ENCODE measurements at regions of chr12 and their contacts with region 1.

Region 1: GRCh38 chr12:47773062-47773857 is at the start of gene SLC48A1:
- DNase-seq: peak; percentile 53 to 80 (median 76)
- ATAC-seq: peak; percentile 91
- H3K4me3 Mint-ChIP-seq: peak within 1 kb of the TSS; percentile 82 to 92 (median 88)
- H3K27ac Mint-ChIP-seq: peak within 1 kb of the TSS; percentile 49 to 88 (median 80)
- H3K4me1 Mint-ChIP-seq: peaks cover 9 to 33% (median 22%) of the 10 kb centered on the region in 4 donors
- H3K27me3 Mint-ChIP-seq: no peaks in the 10 kb centered on the region
- polyA plus RNA-seq, gene SLC48A1: 9.4 to 11.6 (median 9.7) TPM

Region 2: DNA sequence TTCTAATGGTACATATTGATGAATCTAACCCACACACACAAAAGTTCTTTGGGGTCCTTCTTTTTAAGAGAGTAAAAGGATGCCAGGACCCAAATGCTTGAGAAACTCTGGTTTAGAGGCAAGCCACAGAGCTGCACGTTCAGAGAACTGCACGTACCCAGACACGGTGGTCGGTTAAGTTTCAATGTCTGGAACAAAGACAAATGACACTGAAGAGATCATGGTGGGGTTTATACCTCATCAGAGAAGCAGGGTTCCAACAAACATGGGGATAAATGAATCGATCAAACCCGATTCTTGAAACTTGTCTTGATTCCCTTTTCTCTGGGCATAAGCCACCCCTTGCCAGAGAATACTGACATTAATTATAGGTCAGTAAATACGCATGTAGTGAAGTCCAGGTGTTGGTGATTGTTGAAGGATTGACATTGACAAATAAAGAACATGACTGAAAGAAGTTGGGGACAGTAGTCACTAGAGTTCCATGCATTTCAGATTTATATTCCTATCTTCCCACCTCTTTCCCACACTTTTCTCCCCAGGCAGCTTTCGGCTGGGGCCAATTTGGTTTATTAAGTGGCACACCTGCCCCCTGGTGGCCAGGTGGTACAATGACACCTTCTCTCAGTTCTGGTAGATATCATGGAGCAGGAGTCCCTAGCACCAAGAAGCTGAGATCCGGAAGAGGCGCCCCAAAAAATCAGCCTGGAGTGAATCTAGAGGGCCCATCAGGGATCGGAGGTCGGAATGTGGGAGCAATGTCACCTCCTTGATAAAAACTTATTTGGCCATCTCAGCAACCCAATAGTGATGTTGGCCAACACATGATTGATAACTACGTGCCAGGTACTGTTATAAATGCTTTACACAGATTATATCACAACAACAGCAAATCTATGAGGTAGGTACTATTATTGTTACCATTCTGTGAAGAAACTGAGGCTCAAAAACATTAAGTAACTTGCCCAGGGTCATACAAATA is 64.2 kb after region 1 on chr12:
- POLR2A ChIA-PET with region 1: interaction called, 12 read pairs
- DNase-seq: peak; percentile 33 to 77 (median 66)
- ATAC-seq: peak; percentile 24 to 29
- H3K4me3 Mint-ChIP-seq: peak overlapping the region in 4 of 10 donors; percentile 4 to 31 (median 10)
- H3K27ac Mint-ChIP-seq: peak overlapping the region; percentile 11 to 89 (median 68)
- H3K4me1 Mint-ChIP-seq: peaks cover 36 to 61% (median 57%) of the 10 kb centered on the region in 4 donors
- H3K27me3 Mint-ChIP-seq: no peaks in the 10 kb centered on the region

Measured in naive thymus-derived CD8-positive, alpha-beta T cell (primary cell).